ENCODE measurements at regions of chr5 and their contacts with region 1.

Region 1: GRCh38 chr5:121974261-121974660 is 12.5 kb downstream of the SRFBP1 start:
- DNase-seq: no peak
- H3K4me3 ChIP-seq: no peak overlapping the region
- H3K27ac ChIP-seq: no peak overlapping the region
- H3K4me1 ChIP-seq: no peaks in the 10 kb centered on the region
- H3K27me3 ChIP-seq: no peaks in the 10 kb centered on the region
- CTCF ChIP-seq: no peak
- POLR2A ChIP-seq: no peak

Region 2: GRCh38 chr5:121954086-121954485 is 20.2 kb before region 1 on chr5:
- intact Hi-C with region 1: loop called (anchors 2 kb)
- DNase-seq: no peak
- H3K4me3 ChIP-seq: no peak overlapping the region
- H3K27ac ChIP-seq: no peak overlapping the region
- H3K4me1 ChIP-seq: no peaks in the 10 kb centered on the region
- H3K27me3 ChIP-seq: peaks cover 0 to 5% of the 10 kb centered on the region in 2 donors
- CTCF ChIP-seq: no peak
- POLR2A ChIP-seq: no peak